Tibial artery (tissue), 4 donors: ENCODE measurements at regions of chr13 and their contacts with region 1.

Region 1: GRCh38 chr13:34555988-34556387 is 386.1 kb upstream of the NBEA start:
- DNase-seq: no peak
- H3K4me3 ChIP-seq: no peak overlapping the region
- H3K27ac ChIP-seq: no peak overlapping the region
- H3K4me1 ChIP-seq: no peaks in the 10 kb centered on the region
- H3K27me3 ChIP-seq: no peaks in the 10 kb centered on the region
- CTCF ChIP-seq: no peak

Region 2: DNA sequence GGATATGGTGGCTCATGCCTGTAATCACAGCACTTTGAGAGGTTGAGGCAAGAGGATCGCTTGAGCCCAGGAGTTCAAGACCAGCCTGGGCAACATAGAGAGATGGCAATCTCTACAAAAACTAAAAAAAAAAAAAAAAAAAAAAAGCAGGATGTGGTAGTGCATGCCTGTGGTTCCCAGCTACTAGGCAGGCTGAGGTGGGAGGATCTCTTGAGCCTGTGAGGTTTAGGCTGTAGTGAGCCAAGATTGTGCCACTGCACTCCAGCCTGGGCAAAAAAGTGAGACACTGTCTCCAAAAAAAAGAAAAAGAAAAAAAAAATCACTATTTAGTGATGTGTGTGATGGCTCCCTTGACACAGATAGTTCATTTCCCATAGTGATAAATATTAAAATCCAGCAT is 21.1 kb after region 1 on chr13:
- intact Hi-C with region 1: loop called (anchors 1 kb)
- DNase-seq: no peak
- H3K4me3 ChIP-seq: no peak overlapping the region
- H3K27ac ChIP-seq: no peak overlapping the region
- H3K4me1 ChIP-seq: no peaks in the 10 kb centered on the region
- H3K27me3 ChIP-seq: no peaks in the 10 kb centered on the region
- CTCF ChIP-seq: no peak